Activated CD4-positive, alpha-beta memory T cell treated with anti-CD3 and anti-CD28 coated beads for 36 hours (primary cell): ENCODE measurements at regions of chr1 and their contacts with region 1.

Region 1: GRCh38 chr1:234499119-234499942 is 20.4 kb upstream of the TARBP1 start:
- DNase-seq: peak; percentile 90
- H3K4me3 Mint-ChIP-seq: peak overlapping the region; percentile 34
- H3K27ac Mint-ChIP-seq: peak overlapping the region; percentile 85
- H3K4me1 Mint-ChIP-seq: peaks cover 71% of the 10 kb centered on the region
- H3K27me3 Mint-ChIP-seq: peaks cover 4% of the 10 kb centered on the region

Region 2: GRCh38 chr1:234486498-234487448 is 12.6 kb before region 1 on chr1:
- CTCF ChIA-PET with region 1: interaction called, 25 read pairs
- POLR2A ChIA-PET with region 1: interaction called, 9 read pairs
- intact Hi-C with region 1: loop called (anchors 1 kb)
- DNase-seq: peak; percentile 55
- H3K4me3 Mint-ChIP-seq: no peak overlapping the region
- H3K27ac Mint-ChIP-seq: peak overlapping the region; percentile 81
- H3K4me1 Mint-ChIP-seq: peaks cover 36% of the 10 kb centered on the region
- H3K27me3 Mint-ChIP-seq: peaks cover 16% of the 10 kb centered on the region

Region 3: GRCh38 chr1:234599617-234600417 is 100.5 kb after region 1 on chr1:
- CTCF ChIA-PET with region 1: interaction called, 35 read pairs
- POLR2A ChIA-PET with region 1: interaction called, 17 read pairs
- intact Hi-C with region 1: loop called (anchors 1 kb)
- DNase-seq: peak; percentile 82
- H3K4me3 Mint-ChIP-seq: peak overlapping the region; percentile 85
- H3K27ac Mint-ChIP-seq: peak overlapping the region; percentile 100
- H3K4me1 Mint-ChIP-seq: peaks cover 54% of the 10 kb centered on the region
- H3K27me3 Mint-ChIP-seq: no peaks in the 10 kb centered on the region

Region 4: GRCh38 chr1:234772345-234773147 is 273.2 kb after region 1 on chr1:
- CTCF ChIA-PET with region 1: interaction called, 4 read pairs
- POLR2A ChIA-PET with region 1: no interaction called
- intact Hi-C with region 1: loop called (anchors 2 kb)
- DNase-seq: peak; percentile 95
- H3K4me3 Mint-ChIP-seq: peak overlapping the region; percentile 49
- H3K27ac Mint-ChIP-seq: peak overlapping the region; percentile 84
- H3K4me1 Mint-ChIP-seq: peaks cover 54% of the 10 kb centered on the region
- H3K27me3 Mint-ChIP-seq: no peaks in the 10 kb centered on the region

Region 5: DNA sequence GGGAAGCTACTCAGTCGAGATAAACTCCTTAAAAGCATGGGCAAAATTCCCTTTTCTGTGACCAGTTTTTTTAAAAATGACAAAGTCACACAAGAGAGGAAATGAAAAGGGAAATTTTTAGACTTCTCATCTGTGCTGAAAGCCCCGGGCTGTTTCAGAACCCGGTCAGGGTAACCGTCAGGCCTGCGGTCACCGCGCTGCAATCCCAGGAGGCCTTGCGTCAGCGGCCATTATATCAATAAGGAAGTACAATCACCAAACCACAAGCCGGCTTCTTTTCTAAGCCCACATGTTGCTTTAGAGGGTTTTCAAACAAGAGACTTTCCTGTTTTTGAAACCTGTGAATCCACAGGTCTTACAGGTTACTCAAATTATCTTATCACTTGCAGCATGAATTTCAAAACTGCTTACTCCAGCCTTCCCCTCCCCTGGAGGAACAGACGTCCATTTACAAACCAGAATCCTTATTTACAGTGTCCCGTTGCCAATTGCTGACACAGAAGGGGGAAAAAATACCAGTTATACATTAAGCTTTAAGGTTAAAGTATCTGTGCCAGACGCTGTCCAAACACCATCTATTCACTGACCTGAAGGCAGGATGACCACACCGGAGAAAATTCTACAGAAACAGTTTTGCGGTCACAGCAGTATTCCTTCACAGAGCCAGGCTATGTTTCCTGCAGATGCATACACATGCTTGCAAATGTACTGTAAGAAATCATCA is 464.0 kb after region 1 on chr1:
- CTCF ChIA-PET with region 1: interaction called, 5 read pairs
- POLR2A ChIA-PET with region 1: interaction called, 3 read pairs
- intact Hi-C with region 1: loop called (anchors 2 kb)
- DNase-seq: peak; percentile 97
- H3K4me3 Mint-ChIP-seq: peak overlapping the region; percentile 63
- H3K27ac Mint-ChIP-seq: peak overlapping the region; percentile 98
- H3K4me1 Mint-ChIP-seq: peaks cover 67% of the 10 kb centered on the region
- H3K27me3 Mint-ChIP-seq: no peaks in the 10 kb centered on the region

Region 6: DNA sequence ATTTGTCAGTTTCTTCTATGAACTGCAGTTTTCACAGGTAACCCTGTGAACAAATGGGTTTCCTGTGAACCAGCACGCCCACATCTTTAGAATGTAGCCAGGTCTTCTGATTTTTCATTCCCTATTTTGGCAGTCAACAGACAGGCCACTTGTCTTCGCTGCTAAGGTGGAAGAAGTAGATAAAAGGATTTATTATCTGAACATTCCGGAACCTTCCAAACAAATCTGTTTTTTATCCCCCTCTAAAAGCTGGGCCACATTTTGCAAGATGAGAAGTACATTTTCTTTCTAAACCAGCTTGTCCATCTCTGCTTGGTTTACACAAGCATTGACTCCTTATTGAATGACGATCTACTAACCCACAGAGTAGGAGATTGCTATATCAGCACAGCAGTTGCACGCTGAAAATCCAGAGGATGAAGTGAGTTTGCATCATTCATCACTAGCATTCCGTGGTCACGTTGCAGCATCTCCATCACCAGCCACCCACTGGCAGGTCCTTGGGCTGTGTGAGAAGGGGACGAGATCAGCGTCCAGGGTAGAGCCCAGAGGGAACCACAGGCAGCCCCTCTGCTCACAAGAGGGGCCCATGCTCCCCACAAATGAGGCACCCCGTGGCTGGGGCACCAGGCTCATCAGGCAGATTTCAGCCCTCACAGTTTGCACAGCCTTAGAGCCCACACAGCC is 545.8 kb after region 1 on chr1:
- CTCF ChIA-PET with region 1: no interaction called
- POLR2A ChIA-PET with region 1: interaction called, 3 read pairs
- intact Hi-C with region 1: loop called (anchors 1 kb)
- DNase-seq: peak; percentile 70
- H3K4me3 Mint-ChIP-seq: no peak overlapping the region
- H3K27ac Mint-ChIP-seq: peak overlapping the region; percentile 91
- H3K4me1 Mint-ChIP-seq: peaks cover 59% of the 10 kb centered on the region
- H3K27me3 Mint-ChIP-seq: no peaks in the 10 kb centered on the region

Region 7: GRCh38 chr1:235504496-235505222 is 1005.3 kb after region 1 on chr1:
- CTCF ChIA-PET with region 1: no interaction called
- POLR2A ChIA-PET with region 1: interaction called, 3 read pairs
- intact Hi-C with region 1: loop called (anchors 10 kb)
- DNase-seq: peak; percentile 99
- H3K4me3 Mint-ChIP-seq: peak overlapping the region; percentile 86
- H3K27ac Mint-ChIP-seq: peak overlapping the region; percentile 95
- H3K4me1 Mint-ChIP-seq: peaks cover 32% of the 10 kb centered on the region
- H3K27me3 Mint-ChIP-seq: no peaks in the 10 kb centered on the region